ENCODE measurements at regions of chr12 and their contacts with region 1.

Region 1: GRCh38 chr12:120301962-120302815 is at the start of gene SIRT4:
- DNase-seq: peak; percentile 94
- ATAC-seq: peak; percentile 100
- H3K4me3 Mint-ChIP-seq: peak within 1 kb of the TSS; percentile 95
- H3K27ac Mint-ChIP-seq: peak within 1 kb of the TSS; percentile 97
- H3K4me1 Mint-ChIP-seq: peaks cover 9% of the 10 kb centered on the region
- H3K27me3 Mint-ChIP-seq: no peaks in the 10 kb centered on the region
- total RNA-seq, gene SIRT4: 2.2 to 4.0 TPM

Region 2: DNA sequence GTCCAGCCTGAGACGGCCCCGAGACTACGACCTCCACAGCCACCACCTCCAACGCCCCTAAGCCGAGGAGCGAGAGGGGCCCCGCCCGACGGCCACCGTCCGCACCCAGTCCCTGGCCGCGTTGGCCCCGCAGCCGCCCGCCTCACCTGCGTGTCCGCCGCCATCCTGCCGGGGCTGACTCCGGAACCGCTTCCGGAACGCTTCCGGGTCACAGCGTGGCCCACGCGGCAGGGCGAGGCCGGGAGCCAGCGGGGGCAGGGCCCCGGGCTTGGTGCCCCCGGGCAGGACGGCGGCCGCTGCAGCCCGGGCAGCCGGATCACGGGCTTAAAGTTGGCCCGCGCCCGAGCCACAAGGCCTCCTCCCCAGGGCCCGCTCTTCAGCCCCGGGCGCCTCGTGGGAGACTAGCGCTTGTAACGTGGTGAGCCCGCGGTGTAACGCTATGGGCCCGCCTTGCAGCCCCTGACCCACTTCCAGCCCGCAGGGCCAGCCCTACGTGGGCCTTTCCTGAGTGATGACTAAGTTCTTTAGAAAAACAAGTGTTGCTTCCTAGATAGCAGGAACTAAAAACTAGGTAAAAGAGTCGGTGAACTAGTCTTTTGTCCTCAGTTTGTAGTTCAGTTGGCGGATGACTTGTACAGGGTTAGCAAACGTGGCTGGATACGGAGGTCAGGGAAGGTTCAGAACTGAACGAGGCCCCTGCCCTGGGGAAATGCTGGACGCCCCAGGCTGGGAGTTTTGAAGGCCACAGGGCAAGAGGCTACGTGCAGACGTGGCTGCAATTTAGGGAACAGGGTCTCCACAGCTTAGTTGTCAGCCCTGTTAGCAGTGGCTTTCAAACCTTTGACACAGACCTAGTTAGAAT is 107.4 kb before region 1 on chr12 and contains the start of gene GCN1:
- CTCF ChIA-PET with region 1: interaction called, 3 read pairs
- POLR2A ChIA-PET with region 1: interaction called, 29 read pairs
- intact Hi-C with region 1: no loop called
- DNase-seq: peak; percentile 93
- ATAC-seq: peak; percentile 81
- H3K4me3 Mint-ChIP-seq: peak within 1 kb of the TSS; percentile 98
- H3K27ac Mint-ChIP-seq: peak within 1 kb of the TSS; percentile 92
- H3K4me1 Mint-ChIP-seq: peaks cover 45% of the 10 kb centered on the region
- H3K27me3 Mint-ChIP-seq: no peaks in the 10 kb centered on the region
- total RNA-seq, gene GCN1: 125 to 139 TPM

Region 3: GRCh38 chr12:120209851-120210250 is 92.3 kb before region 1 on chr12:
- CTCF ChIA-PET with region 1: no interaction called
- POLR2A ChIA-PET with region 1: no interaction called
- intact Hi-C with region 1: no loop called
- DNase-seq: no peak
- ATAC-seq: no peak
- H3K4me3 Mint-ChIP-seq: no peak overlapping the region
- H3K27ac Mint-ChIP-seq: no peak overlapping the region
- H3K4me1 Mint-ChIP-seq: no peaks in the 10 kb centered on the region
- H3K27me3 Mint-ChIP-seq: no peaks in the 10 kb centered on the region

Measured in activated CD4-positive, alpha-beta T cell treated with anti-CD3 and anti-CD28 coated beads for 36 hours (primary cell).